Activated T-helper 1 cell treated with anti-CD3 and anti-CD28 coated beads, Interleukin-12 subunit alpha, Interleukin-12 subunit beta, Interleukin-2, Interleukin-4 antibody, amounts not matched to agents 30 ng/mL and 10 ng/mL and 1 ng/mL, durations not matched to agents 14 hours and 24 hours and 36 hours (primary cell): ENCODE measurements at regions of chr10 and their contacts with region 1.

Region 1: GRCh38 chr10:26881600-26882331 is 21.0 kb upstream of the ABI1 start:
- DNase-seq: no peak
- H3K4me3 Mint-ChIP-seq: no peak overlapping the region
- H3K27ac Mint-ChIP-seq: no peak overlapping the region
- H3K4me1 Mint-ChIP-seq: peaks cover 6% of the 10 kb centered on the region
- H3K27me3 Mint-ChIP-seq: peaks cover 17% of the 10 kb centered on the region

Region 2: GRCh38 chr10:26685441-26685840 is 196.3 kb before region 1 on chr10:
- intact Hi-C with region 1: loop called (anchors 1 kb)
- DNase-seq: no peak
- H3K4me3 Mint-ChIP-seq: no peak overlapping the region
- H3K27ac Mint-ChIP-seq: no peak overlapping the region
- H3K4me1 Mint-ChIP-seq: peaks cover 31% of the 10 kb centered on the region
- H3K27me3 Mint-ChIP-seq: no peaks in the 10 kb centered on the region

Region 3: DNA sequence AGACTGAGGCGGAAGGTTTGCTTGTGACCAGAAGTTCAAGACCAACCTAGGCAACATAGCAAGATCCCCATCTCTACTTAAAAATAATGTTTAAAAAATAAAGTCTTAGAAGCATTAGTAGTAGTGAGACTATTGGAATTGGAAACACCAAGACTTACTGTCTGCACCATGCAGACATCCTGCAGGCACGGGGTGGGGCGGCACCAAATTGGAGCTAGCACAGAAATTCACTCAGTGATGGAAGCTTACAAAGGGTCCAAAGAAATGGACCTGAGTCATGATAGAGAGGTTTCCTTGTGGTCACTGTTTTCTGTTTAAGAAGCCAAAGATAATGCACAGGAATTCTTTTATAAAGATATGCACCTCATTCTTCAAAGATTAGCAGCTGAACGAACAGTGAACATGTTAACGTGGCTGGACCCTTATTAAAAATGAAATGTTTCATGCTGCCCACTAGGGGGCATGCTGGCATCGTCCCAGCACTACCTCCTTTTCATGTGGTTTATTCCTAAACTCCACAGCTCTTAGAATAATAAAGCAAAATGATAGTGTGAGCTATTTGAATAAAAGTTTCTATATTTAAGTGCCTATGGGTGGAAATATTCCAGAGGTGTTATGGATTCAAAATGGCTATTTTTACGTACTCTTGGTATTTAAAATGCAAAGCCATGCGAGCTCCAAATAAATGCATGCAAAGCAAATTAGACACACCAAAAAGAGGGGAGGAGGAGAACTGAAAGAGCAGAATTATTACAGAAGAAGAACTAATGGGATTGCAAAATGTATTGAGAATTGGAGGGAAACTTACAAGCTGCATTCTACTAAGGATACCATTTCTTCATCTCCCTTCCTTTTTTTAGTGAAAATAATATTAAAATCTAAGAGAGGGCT is 155.7 kb before region 1 on chr10:
- intact Hi-C with region 1: loop called (anchors 1 kb)
- DNase-seq: no peak
- H3K4me3 Mint-ChIP-seq: no peak overlapping the region
- H3K27ac Mint-ChIP-seq: peak overlapping the region; percentile 42
- H3K4me1 Mint-ChIP-seq: peaks cover 15% of the 10 kb centered on the region
- H3K27me3 Mint-ChIP-seq: no peaks in the 10 kb centered on the region

Region 4: DNA sequence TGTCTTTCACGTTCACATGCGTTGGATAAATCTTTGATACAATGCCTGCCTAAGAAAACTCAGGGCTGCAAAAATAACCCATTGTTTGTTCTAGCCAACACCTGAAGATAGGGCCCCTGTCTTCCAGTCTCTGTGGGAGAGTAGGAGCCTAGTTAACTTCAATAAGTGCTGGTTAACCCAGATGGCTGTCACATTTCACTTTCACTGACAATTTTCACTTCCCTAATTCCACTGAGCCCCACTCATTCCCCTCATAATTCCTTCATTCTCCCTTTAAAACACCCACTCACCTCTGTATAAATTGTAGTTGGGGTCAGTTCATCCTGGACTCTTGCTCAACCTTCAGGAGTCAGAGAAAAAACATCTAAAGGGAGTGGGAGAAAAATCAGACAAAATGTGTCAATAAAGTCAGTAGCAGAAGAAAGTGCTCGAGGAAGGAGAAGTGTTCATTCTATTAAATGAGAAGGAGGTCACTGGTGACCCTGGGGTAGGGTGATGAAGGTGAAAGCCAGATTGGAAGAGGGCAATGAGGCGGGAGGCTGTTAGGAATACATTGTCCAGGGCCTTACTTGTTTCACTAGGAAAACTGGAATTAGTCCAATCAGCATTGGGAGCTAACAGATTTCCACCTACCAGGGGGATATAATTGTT is 30.2 kb after region 1 on chr10:
- intact Hi-C with region 1: no loop called
- DNase-seq: no peak
- H3K4me3 Mint-ChIP-seq: no peak overlapping the region
- H3K27ac Mint-ChIP-seq: no peak overlapping the region
- H3K4me1 Mint-ChIP-seq: no peaks in the 10 kb centered on the region
- H3K27me3 Mint-ChIP-seq: peaks cover 2% of the 10 kb centered on the region